ENCODE measurements at regions of chr13 and their contacts with region 1.

Region 1: DNA sequence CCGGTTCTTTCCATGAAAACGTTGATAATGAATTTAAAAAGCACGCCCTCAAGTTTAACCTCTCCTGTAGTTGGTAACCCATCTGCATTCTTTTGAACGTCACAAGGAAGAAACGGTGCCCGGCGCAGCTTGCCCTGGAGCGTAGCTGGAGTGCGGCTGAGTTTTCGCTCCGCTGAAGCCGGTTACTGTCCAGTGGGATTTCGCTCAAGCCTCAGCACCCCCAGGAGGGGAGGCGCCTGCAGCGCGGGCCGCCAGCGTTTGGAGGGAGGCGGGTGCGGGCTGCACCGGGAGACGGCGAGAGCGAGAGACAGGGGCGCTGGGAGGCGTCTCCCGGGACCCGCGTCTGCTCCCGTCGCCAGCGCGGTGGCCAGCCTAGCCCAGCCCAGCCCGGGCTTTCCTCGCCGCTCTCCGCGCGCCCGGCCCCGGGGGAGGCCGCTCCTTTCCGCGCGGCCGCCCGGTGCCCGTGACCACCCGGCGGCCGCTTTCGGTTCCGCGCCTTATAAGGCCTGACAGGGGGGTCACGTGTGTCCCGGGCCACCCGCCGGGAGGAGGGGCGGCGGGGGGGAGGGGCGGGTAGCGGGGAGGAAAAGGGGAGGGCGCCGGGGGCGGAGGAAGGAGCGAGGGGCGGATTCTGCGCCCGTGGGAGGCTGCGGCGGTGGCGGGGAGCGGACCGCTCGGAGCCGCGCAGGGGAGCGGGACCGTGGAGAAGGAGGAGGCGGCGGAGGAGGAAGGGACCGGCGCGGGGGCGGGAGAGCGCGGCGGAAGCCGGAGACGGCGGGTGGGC is 8.3 kb upstream of the DGKH start:
- DNase-seq: peak; percentile 83
- H3K4me3 ChIP-seq: peak overlapping the region; percentile 60 to 85 (median 69)
- H3K27ac ChIP-seq: peak overlapping the region; percentile 65
- H3K4me1 ChIP-seq: peaks cover 12% of the 10 kb centered on the region
- H3K27me3 ChIP-seq: no peaks in the 10 kb centered on the region
- CTCF ChIP-seq: no peak
- POLR2A ChIP-seq: peak; percentile 93

Region 2: DNA sequence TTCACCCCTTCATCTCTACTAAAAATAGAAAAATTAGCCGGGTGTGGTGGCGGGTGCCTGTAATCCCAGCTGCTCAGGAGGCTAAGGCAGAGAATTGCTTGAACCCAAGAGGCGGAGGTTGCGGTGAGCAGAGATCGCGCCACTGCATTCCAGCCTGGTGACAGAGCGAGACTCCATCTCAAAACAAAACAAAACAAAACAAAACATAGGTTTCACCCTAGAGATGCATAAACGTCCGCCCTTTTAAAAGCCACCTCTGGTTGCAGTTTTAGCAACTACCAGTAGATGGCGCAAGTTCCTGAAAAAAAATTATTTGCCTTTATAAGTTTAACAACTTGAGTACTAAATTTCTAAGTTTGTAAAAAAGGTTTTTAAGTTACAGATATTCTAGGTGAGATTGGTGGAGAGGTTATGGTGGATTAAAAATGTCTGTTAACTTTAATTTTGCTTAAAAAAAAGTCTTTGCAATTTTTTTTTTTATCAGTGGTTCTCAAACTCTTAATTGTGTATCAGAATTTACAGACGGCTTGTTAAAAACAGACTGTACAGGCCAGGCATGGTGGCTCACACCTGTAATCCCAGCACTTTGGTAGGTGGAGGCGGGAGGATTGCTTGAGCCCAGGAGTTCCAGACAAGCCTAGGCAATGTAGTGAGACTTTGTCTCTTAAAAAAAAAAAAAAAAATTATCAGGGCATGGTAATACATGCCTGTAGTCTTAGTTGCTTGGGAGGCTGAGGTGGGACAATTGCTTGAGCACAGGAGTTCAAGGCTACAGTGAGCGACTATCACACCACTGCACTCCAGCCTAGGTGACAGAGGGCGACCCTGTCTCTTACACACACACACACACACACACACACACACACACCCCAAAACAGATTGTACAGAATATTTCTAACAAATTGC is 687.0 kb before region 1 on chr13:
- CTCF ChIA-PET with region 1: no interaction called
- POLR2A ChIA-PET with region 1: no interaction called
- dilution Hi-C with region 1: no loop called
- intact Hi-C with region 1: loop called (anchors 2 kb)
- DNase-seq: peak; percentile 87
- H3K4me3 ChIP-seq: no peak overlapping the region
- H3K27ac ChIP-seq: peak overlapping the region; percentile 72
- H3K4me1 ChIP-seq: peaks cover 12% of the 10 kb centered on the region
- H3K27me3 ChIP-seq: no peaks in the 10 kb centered on the region
- CTCF ChIP-seq: peak; percentile 59 to 69
- POLR2A ChIP-seq: no peak

Region 3: DNA sequence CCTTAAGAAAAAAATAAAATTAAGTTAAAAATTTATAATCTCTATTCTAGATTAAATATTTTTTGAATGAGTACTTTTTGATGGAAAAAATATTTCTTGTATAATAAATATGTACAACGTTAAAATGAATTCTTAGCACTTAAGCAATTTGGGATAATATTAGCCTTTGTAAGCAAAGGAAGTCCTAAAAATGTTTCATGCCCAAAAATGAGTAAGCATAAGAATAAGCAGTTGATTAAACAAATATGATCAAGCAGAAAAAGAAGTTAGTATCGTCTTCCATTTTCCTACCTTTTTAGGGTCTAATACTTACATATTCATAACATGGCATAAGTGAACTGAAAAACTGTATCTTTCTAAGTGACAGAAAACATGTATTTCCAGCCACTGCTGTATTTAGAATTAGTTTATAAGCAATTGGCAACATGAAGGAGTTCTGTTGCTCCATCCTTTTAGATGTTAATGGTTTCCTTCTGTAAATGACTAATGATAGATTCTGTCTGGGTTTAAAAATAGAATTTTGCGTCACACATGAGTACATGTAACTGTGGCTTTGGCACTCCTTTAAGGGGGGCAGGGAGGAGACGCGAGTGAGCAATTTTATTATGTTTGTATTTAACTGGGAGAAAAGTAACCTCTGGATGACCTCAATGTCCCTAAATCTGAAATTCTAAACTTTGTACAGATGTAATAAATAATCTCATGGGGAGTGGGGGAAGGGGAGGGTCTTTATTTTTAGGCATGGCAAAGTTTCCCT is 345.4 kb before region 1 on chr13:
- CTCF ChIA-PET with region 1: no interaction called
- POLR2A ChIA-PET with region 1: no interaction called
- dilution Hi-C with region 1: no loop called
- intact Hi-C with region 1: loop called (anchors 10 kb)
- DNase-seq: peak; percentile 93
- H3K4me3 ChIP-seq: peak overlapping the region in 1 of 3 experiments; percentile 30
- H3K27ac ChIP-seq: peak overlapping the region; percentile 88
- H3K4me1 ChIP-seq: peaks cover 34% of the 10 kb centered on the region
- H3K27me3 ChIP-seq: no peaks in the 10 kb centered on the region
- CTCF ChIP-seq: no peak
- POLR2A ChIP-seq: no peak

Region 4: DNA sequence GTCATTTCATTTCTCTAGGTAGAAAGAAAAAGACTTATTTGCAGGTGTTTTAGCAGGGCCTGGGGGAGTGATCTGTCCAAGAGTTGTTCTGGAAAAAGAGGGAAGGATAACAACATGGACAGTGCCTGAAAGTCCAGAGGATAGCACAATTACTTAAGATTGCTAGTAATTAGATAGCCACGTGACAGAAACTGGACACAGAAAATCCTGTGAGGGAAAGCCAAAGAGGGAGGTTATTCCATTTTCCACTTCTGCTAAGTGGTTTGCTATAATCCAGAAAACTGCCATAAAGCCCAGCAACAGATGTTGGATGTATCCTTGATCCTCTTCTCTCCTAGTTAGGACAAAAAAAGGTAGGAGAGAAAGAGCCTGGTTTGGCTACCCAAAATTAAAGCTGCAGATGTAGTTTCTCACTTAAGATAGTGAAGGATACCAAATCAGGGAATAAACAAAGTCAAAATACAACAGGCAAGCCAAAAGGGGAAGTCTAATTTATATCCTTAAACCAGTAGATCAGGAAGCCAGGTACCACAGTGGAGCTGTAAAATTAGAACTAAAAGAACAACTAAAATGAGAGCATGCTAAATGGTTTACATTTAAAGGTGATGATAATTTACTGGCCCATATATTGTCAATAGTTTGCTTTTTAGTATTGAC is 219.4 kb before region 1 on chr13:
- CTCF ChIA-PET with region 1: no interaction called
- POLR2A ChIA-PET with region 1: no interaction called
- dilution Hi-C with region 1: no loop called
- intact Hi-C with region 1: loop called (anchors 5 kb)
- DNase-seq: no peak
- H3K4me3 ChIP-seq: no peak overlapping the region
- H3K27ac ChIP-seq: no peak overlapping the region
- H3K4me1 ChIP-seq: peaks cover 7% of the 10 kb centered on the region
- H3K27me3 ChIP-seq: no peaks in the 10 kb centered on the region
- CTCF ChIP-seq: no peak
- POLR2A ChIP-seq: no peak

Region 5: DNA sequence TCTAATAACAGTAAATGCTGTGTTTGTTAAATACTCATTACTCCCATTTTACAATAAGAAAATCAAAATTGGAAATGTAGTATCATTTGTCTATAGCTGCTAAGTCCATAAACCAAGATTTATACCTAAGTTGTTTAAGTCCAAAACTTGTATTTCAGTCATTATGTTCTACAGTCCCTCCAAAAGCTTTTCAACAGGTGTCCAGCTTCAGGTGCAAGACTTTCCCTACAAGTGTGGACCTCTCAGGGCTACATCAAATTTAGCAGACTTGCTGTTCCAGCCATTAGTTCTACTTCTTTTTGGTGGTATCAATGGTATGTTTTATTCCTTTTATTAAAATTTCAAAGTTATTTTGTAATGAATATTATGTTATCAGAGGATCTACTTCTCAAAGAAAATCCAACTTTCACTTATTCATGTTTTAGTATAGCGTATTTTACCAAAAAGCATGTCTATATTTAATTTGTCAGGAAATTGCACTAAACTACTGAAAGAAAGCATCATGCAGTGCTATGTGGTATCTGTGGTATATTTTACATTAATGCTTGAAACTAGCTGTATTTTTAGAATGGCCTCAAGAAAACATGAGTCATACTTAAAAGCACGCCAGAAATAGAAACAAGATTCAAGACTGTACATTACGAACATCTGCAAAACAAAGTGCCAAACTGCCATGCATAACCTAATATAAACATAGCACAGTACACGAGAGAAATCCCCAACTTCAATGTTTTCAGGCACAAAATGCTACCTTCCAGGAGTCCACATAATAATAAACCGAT is 123.8 kb before region 1 on chr13:
- CTCF ChIA-PET with region 1: interaction called, 3 read pairs
- POLR2A ChIA-PET with region 1: no interaction called
- dilution Hi-C with region 1: no loop called
- intact Hi-C with region 1: loop called (anchors 5 kb)
- DNase-seq: peak; percentile 86
- H3K4me3 ChIP-seq: peak overlapping the region in 1 of 3 experiments; percentile 51
- H3K27ac ChIP-seq: peak overlapping the region; percentile 61
- H3K4me1 ChIP-seq: peaks cover 23% of the 10 kb centered on the region
- H3K27me3 ChIP-seq: no peaks in the 10 kb centered on the region
- CTCF ChIP-seq: no peak
- POLR2A ChIP-seq: no peak

Region 6: GRCh38 chr13:41960639-41961465 is 79.3 kb before region 1 on chr13 and contains the start of gene VWA8:
- CTCF ChIA-PET with region 1: interaction called, 5 read pairs
- POLR2A ChIA-PET with region 1: interaction called, 5 read pairs
- dilution Hi-C with region 1: no loop called
- intact Hi-C with region 1: loop called (anchors 2 kb)
- DNase-seq: peak; percentile 60
- H3K4me3 ChIP-seq: peak within 1 kb of the TSS; percentile 52 to 61 (median 54)
- H3K27ac ChIP-seq: peak within 1 kb of the TSS; percentile 2
- H3K4me1 ChIP-seq: peaks cover 8% of the 10 kb centered on the region
- H3K27me3 ChIP-seq: no peaks in the 10 kb centered on the region
- CTCF ChIP-seq: no peak
- POLR2A ChIP-seq: no peak
- total RNA-seq, gene VWA8: 11.3 and 12.7 TPM in 2 replicates

Region 7: GRCh38 chr13:42110410-42111155 is 70.4 kb after region 1 on chr13:
- CTCF ChIA-PET with region 1: interaction called, 3 read pairs
- POLR2A ChIA-PET with region 1: no interaction called
- dilution Hi-C with region 1: no loop called
- intact Hi-C with region 1: loop called (anchors 2 kb)
- DNase-seq: peak; percentile 84
- H3K4me3 ChIP-seq: no peak overlapping the region
- H3K27ac ChIP-seq: no peak overlapping the region
- H3K4me1 ChIP-seq: no peaks in the 10 kb centered on the region
- H3K27me3 ChIP-seq: no peaks in the 10 kb centered on the region
- CTCF ChIP-seq: peak; percentile 38 to 52
- POLR2A ChIP-seq: no peak